Activated CD8-positive, alpha-beta T cell treated with anti-CD3 and anti-CD28 coated beads for 36 hours (primary cell): ENCODE measurements at regions of chr14 and their contacts with region 1.

Region 1: DNA sequence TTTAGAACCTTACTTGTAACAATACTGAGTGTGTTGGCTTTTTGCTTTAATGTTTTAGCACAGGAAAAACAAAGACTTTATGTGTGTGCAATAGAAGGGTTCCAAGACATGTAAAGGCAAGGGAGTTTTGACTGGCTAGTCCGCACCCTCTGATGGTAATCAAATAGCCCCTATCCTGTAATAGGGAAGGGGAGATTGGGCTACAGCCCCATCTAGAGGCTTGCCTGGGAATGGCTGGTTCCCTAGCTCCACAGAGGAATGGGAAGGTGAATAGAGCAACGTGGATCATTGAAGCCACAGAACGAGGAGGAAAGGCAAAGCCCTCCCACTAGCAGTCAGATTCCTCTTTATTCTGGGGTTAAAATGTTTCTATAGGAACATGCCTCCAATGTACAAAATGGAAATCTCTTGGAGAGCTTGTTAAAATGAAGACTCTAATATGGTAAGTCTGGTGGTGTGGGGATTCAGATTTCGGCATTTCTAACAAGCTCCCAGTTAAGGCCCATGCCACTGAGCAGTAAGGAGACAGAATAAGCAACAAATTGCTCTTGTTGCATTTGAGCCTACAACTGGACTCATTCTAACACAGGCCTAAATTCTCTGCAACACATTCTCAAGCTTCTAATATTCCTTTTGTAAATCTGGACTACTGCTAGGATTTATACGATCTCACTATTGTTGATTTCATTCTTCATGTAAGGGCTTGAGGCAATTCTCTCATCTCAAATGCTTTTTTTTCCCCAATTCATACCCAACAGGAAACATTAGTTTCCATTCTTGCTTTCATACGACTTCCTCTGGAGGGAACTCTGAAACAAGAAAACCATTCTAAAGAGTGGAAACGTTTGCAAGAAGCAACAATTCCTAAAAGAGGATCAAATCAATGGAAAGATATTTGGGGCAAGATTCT is 57.1 kb downstream of the NIN start:
- DNase-seq: peak; percentile 59
- ATAC-seq: peak; percentile 73
- H3K4me3 Mint-ChIP-seq: no peak overlapping the region
- H3K27ac Mint-ChIP-seq: peak overlapping the region; percentile 36
- H3K4me1 Mint-ChIP-seq: peaks cover 34% of the 10 kb centered on the region
- H3K27me3 Mint-ChIP-seq: no peaks in the 10 kb centered on the region
- CTCF ChIP-seq: peak; percentile 87

Region 2: DNA sequence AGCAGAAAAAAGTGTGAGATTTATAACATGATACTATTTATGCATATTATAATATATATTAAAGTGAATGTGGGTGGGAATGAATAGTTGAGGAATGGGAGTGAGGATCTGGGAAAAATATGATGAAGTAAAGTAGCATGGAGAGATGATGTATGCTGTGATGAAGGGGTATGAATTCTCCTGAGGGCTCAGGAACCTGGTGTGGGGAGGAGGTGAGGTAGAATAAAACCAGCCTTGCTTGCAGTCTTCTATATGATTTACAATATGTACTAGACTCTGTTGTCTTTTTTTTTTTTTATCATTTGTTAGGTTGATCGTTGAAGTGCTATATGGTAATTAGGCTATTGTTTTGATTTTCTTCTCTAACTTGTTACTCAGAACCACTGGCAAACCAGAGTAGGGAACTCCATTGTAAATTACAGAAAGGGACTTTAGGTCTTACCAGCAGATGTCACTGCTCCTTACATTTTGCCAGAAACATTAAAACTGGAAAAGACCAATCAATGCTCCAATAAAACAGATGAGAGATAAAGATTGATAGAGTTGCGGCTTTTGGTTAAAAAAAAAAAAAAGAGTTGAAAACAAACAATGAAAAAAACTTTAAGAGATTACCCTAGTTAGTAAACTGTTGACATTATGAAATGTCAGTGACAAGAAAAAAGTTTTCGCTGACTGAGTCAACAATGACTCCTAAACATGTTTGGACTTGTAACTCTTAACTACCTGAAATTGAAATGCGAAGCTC is 174.0 kb before region 1 on chr14:
- CTCF ChIA-PET with region 1: interaction called, 17 read pairs
- POLR2A ChIA-PET with region 1: no interaction called
- intact Hi-C with region 1: loop called (anchors 5 kb)
- DNase-seq: no peak
- ATAC-seq: peak; percentile 39
- H3K4me3 Mint-ChIP-seq: no peak overlapping the region
- H3K27ac Mint-ChIP-seq: no peak overlapping the region
- H3K4me1 Mint-ChIP-seq: no peaks in the 10 kb centered on the region
- H3K27me3 Mint-ChIP-seq: no peaks in the 10 kb centered on the region
- CTCF ChIP-seq: peak; percentile 45

Region 3: DNA sequence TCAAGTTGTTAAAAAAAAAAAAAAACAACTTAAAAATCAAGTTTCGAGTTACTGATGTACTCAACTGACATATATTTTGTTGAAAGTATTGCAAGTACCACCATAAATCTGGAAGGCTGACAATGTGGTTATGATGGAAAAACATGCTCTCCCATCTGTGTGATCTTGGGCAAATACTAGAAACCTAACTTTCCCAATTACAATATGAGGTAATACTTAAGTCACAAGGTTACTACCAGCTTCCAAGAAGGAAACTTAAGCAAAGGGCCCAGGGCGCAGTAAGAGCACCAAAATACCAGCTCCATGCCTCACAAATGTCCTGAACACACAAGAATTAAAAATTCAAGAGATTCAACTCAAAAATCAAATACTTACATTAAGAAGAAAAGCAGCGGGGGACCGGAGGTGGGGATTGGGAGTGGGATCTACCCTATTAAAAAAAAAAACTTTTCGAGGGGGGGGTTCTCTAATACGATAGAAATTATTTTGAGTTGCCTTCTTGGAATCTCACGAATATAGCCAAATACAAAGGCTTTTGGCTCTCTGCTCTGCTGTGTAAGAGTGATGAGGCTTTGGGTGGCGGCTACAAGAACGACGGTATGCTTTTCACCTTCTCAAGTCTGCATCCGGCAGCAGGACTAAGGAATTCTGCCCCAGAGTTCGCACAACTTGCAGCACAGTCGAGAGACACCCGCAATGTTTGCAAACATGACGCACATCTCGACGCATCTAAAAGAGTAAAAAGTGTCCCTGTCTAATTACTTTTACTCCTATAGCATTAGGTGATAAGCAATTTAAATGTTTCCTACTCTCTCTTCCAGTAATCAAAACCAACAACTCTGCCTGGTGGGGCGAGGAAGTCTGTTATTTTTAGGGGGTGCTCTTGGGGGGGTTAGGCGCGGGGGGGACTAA is 106.9 kb before region 1 on chr14:
- CTCF ChIA-PET with region 1: interaction called, 10 read pairs
- POLR2A ChIA-PET with region 1: interaction called, 5 read pairs
- intact Hi-C with region 1: loop called (anchors 10 kb)
- DNase-seq: peak; percentile 33
- ATAC-seq: no peak
- H3K4me3 Mint-ChIP-seq: no peak overlapping the region
- H3K27ac Mint-ChIP-seq: peak overlapping the region; percentile 70
- H3K4me1 Mint-ChIP-seq: peaks cover 12% of the 10 kb centered on the region
- H3K27me3 Mint-ChIP-seq: no peaks in the 10 kb centered on the region
- CTCF ChIP-seq: no peak

Region 4: GRCh38 chr14:50762001-50762930 is 11.6 kb before region 1 on chr14:
- CTCF ChIA-PET with region 1: interaction called, 208 read pairs
- POLR2A ChIA-PET with region 1: interaction called, 11 read pairs
- intact Hi-C with region 1: no loop called
- DNase-seq: peak; percentile 83
- ATAC-seq: peak; percentile 99
- H3K4me3 Mint-ChIP-seq: no peak overlapping the region
- H3K27ac Mint-ChIP-seq: peak overlapping the region; percentile 88
- H3K4me1 Mint-ChIP-seq: peaks cover 44% of the 10 kb centered on the region
- H3K27me3 Mint-ChIP-seq: no peaks in the 10 kb centered on the region
- CTCF ChIP-seq: no peak